ENCODE measurements at regions of chr4 and their contacts with region 1.

Region 1: GRCh38 chr4:55736605-55737183 is 82.9 kb upstream of the EXOC1L start:
- DNase-seq: no peak
- ATAC-seq: no peak
- H3K4me3 ChIP-seq: no peak overlapping the region
- H3K27ac ChIP-seq: no peak overlapping the region
- H3K4me1 ChIP-seq: no peaks in the 10 kb centered on the region
- H3K27me3 ChIP-seq: no peaks in the 10 kb centered on the region
- CTCF ChIP-seq: no peak
- EP300 ChIP-seq: no peak
- POLR2A ChIP-seq: no peak
- RAD21 ChIP-seq: no peak

Region 2: GRCh38 chr4:55312489-55313101 is 424.1 kb before region 1 on chr4:
- CTCF ChIA-PET with region 1: no interaction called
- POLR2A ChIA-PET with region 1: no interaction called
- in situ Hi-C with region 1: no loop called
- intact Hi-C with region 1: loop called (anchors 10 kb)
- DNase-seq: peak; percentile 33
- ATAC-seq: peak; percentile 91
- H3K4me3 ChIP-seq: no peak overlapping the region
- H3K27ac ChIP-seq: no peak overlapping the region
- H3K4me1 ChIP-seq: no peaks in the 10 kb centered on the region
- H3K27me3 ChIP-seq: peaks cover 0 to 3% of the 10 kb centered on the region in 2 experiments; a peak in 1 of 5 replicates
- CTCF ChIP-seq: peak; percentile 70
- EP300 ChIP-seq: no peak
- POLR2A ChIP-seq: no peak
- RAD21 ChIP-seq: peak; percentile 19; the same call in 1 of the 2 replicates

Region 3: GRCh38 chr4:55468724-55469123 is 268.0 kb before region 1 on chr4:
- CTCF ChIA-PET with region 1: no interaction called
- POLR2A ChIA-PET with region 1: no interaction called
- in situ Hi-C with region 1: loop called (anchors 25 kb)
- intact Hi-C with region 1: no loop called
- DNase-seq: peak; percentile 49
- ATAC-seq: no peak; the same call in 2 of the 3 replicates
- H3K4me3 ChIP-seq: no peak overlapping the region
- H3K27ac ChIP-seq: no peak overlapping the region
- H3K4me1 ChIP-seq: no peaks in the 10 kb centered on the region
- H3K27me3 ChIP-seq: no peaks in the 10 kb centered on the region
- CTCF ChIP-seq: no peak
- EP300 ChIP-seq: no peak
- POLR2A ChIP-seq: no peak
- RAD21 ChIP-seq: no peak